ENCODE measurements at regions of chrX and their contacts with region 1.

Region 1: DNA sequence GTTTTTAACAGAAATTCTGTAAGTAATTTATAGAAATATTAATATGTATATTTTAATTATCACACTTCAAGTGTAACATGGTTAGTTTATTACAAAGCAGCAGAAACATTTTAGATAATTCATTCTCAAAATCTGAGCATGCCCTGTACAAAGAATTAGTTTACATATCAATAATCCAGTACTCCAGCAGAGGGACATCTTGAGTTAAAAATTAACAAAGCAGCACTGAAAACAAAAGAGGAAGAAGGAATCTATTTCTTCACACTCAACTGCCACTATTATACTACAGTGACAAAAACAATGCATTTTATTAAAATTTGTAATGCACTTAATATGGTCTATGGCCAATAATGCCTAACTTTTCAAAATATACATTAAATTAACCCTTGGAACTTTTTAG is 179.1 kb upstream of the KLHL4 start:
- DNase-seq: no peak
- H3K4me3 ChIP-seq: no peak overlapping the region
- H3K27ac ChIP-seq: no peak overlapping the region
- H3K4me1 ChIP-seq: no peaks in the 10 kb centered on the region
- H3K27me3 ChIP-seq: no peaks in the 10 kb centered on the region
- CTCF ChIP-seq: peak in 1 of 4 experiments; percentile 34
- EP300 ChIP-seq: no peak
- POLR2A ChIP-seq: no peak

Region 2: DNA sequence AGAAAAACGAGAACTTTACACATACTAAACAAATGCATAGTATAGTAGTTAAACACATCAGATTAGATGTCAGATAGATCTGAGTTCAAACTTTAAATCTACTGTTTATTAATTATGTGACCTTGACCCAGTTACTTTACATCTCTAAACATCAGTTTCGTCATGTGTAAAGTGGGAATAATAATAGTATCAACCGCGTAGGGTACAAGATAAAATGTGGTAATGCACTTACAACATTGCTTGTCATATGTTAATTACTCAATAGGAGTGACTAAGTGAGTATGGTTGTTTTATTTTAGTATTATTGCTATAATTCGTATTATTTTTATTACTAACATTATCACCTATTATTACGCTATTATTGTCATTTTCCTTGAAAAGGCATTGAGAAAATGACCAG is 323.3 kb after region 1 on chrX:
- intact Hi-C with region 1: loop called (anchors 2 kb)
- DNase-seq: no peak
- H3K4me3 ChIP-seq: no peak overlapping the region
- H3K27ac ChIP-seq: no peak overlapping the region
- H3K4me1 ChIP-seq: no peaks in the 10 kb centered on the region
- H3K27me3 ChIP-seq: no peaks in the 10 kb centered on the region
- CTCF ChIP-seq: no peak
- EP300 ChIP-seq: no peak
- POLR2A ChIP-seq: no peak

Measured in sigmoid colon (tissue), 7 donors.